ENCODE measurements at regions of chr10 and their contacts with region 1.

Region 1: GRCh38 chr10:62050893-62051433 is 149.5 kb downstream of the ARID5B start:
- DNase-seq: peak; percentile 90
- H3K4me3 ChIP-seq: peak overlapping the region; percentile 46 to 53 (median 47)
- H3K27ac ChIP-seq: peak overlapping the region; percentile 94
- H3K4me1 ChIP-seq: peaks cover 38% of the 10 kb centered on the region
- H3K27me3 ChIP-seq: no peaks in the 10 kb centered on the region
- CTCF ChIP-seq: no peak

Region 2: DNA sequence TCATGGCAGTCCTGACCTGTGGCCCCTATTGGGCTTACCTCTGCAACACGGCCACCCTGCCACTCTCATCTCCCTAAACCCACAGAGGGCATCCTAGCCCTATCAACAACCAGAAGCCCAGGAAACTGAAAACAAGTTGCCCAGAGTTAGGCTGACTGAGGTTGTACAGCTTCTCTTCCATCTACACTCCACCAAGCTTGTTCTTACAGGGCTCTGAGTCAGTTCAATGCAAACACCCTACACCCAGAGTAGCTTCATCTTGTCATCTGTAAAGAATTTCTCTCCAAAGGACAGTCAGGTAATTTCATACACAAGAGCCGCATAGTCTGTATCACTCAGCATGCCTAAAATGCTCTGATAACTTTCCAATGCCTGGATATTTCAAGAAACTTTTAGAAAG is 25.9 kb after region 1 on chr10:
- CTCF ChIA-PET with region 1: no interaction called
- dilution Hi-C with region 1: no loop called
- in situ Hi-C with region 1: no loop called
- intact Hi-C with region 1: loop called (anchors 1 kb)
- DNase-seq: peak; percentile 89
- H3K4me3 ChIP-seq: no peak overlapping the region
- H3K27ac ChIP-seq: peak overlapping the region; percentile 64
- H3K4me1 ChIP-seq: peaks cover 28% of the 10 kb centered on the region
- H3K27me3 ChIP-seq: no peaks in the 10 kb centered on the region
- CTCF ChIP-seq: no peak

Region 3: GRCh38 chr10:62082729-62083411 is 31.9 kb after region 1 on chr10:
- CTCF ChIA-PET with region 1: no interaction called
- dilution Hi-C with region 1: no loop called
- in situ Hi-C with region 1: no loop called
- intact Hi-C with region 1: loop called (anchors 2 kb)
- DNase-seq: peak; percentile 38
- H3K4me3 ChIP-seq: peak overlapping the region in 2 of 3 experiments; percentile 1 to 21
- H3K27ac ChIP-seq: peak overlapping the region; percentile 98
- H3K4me1 ChIP-seq: peaks cover 36% of the 10 kb centered on the region
- H3K27me3 ChIP-seq: no peaks in the 10 kb centered on the region
- CTCF ChIP-seq: no peak

Region 4: DNA sequence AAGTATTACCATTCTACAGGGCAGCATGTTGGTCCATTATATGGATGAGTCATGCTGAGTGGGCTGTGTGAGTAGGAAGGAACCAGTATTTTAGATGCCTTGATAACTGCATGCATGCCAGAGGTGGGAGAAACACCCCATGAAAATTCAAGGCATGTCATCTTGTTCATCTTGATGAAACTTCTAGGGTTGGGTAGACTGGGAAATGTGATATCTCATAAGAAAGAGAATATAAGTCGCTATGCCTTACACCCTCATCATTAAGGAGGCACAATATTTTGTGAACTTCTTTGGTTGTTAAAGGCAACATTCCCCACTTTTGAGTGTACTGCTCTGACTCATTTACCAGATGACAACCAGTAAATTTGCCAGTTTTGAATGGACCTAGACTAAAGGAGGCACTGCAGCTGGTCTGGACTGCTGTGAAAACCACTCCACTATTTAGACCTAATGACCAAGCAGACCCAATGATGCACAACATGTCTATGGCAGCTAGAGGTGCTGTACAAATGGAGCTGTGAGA is 371.2 kb after region 1 on chr10:
- CTCF ChIA-PET with region 1: no interaction called
- dilution Hi-C with region 1: no loop called
- in situ Hi-C with region 1: no loop called
- intact Hi-C with region 1: no loop called
- DNase-seq: peak; percentile 88
- H3K4me3 ChIP-seq: no peak overlapping the region
- H3K27ac ChIP-seq: peak overlapping the region; percentile 59
- H3K4me1 ChIP-seq: peaks cover 30% of the 10 kb centered on the region
- H3K27me3 ChIP-seq: no peaks in the 10 kb centered on the region
- CTCF ChIP-seq: peak; percentile 11